ENCODE measurements at regions of chr3 and their contacts with region 1.

Region 1: GRCh38 chr3:58640700-58641372 is 25.7 kb downstream of the FAM3D start:
- DNase-seq: peak; percentile 93
- ATAC-seq: peak; percentile 96
- H3K4me3 Mint-ChIP-seq: peak overlapping the region; percentile 40; the same call in 1 of the 2 replicates
- H3K27ac Mint-ChIP-seq: no peak overlapping the region
- H3K4me1 Mint-ChIP-seq: peaks cover 2% of the 10 kb centered on the region; the same call in 1 of the 2 replicates
- H3K27me3 Mint-ChIP-seq: peaks cover 62% of the 10 kb centered on the region
- CTCF ChIP-seq: peak; percentile 80

Region 2: GRCh38 chr3:58659051-58659675 is 18.3 kb after region 1 on chr3:
- CTCF ChIA-PET with region 1: interaction called, 21 read pairs
- POLR2A ChIA-PET with region 1: no interaction called
- DNase-seq: peak; percentile 51
- ATAC-seq: peak; percentile 93
- H3K4me3 Mint-ChIP-seq: no peak overlapping the region
- H3K27ac Mint-ChIP-seq: no peak overlapping the region
- H3K4me1 Mint-ChIP-seq: peaks cover 7% of the 10 kb centered on the region
- H3K27me3 Mint-ChIP-seq: no peaks in the 10 kb centered on the region; the same call in 1 of the 2 replicates
- CTCF ChIP-seq: no peak

Measured in WTC11 (cell line).